ENCODE measurements at regions of chr11 and their contacts with region 1.

Region 1: DNA sequence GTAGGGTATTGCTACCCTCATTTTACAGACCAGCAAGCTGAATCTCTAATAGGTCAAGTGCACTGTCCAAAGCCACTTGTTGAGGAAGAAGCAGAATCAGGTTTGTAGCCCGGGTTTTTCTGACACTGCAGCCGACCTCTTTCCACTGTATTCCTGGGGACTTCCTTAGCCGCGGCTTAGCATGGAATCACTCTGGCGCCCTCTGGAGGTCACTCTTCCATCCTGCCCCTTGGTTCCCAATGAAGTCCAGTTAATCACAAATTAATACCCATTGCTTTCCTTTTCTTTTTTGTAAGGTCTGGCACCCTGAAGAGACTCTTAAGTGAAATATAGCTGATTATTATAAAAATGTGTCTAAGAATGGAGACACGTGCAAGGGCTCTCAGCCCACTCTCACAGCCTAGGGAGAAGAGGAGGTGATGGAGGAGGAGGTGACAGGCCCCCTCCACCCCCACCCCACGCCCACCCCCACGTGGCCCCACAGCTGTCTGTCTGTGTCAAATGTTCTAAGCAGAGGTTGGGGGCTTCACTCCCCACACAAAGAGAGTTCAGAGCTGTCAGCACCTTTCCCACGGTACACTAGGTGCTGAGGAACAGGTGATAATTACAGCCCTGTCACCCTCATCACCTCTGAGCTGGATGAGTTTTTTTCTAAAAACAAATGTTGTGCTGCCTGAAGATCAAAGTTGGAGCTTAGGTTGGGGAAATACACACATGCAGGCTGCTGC is 57.7 kb upstream of the DRD2 start:
- DNase-seq: peak; percentile 48 to 96 (median 85)

Region 2: DNA sequence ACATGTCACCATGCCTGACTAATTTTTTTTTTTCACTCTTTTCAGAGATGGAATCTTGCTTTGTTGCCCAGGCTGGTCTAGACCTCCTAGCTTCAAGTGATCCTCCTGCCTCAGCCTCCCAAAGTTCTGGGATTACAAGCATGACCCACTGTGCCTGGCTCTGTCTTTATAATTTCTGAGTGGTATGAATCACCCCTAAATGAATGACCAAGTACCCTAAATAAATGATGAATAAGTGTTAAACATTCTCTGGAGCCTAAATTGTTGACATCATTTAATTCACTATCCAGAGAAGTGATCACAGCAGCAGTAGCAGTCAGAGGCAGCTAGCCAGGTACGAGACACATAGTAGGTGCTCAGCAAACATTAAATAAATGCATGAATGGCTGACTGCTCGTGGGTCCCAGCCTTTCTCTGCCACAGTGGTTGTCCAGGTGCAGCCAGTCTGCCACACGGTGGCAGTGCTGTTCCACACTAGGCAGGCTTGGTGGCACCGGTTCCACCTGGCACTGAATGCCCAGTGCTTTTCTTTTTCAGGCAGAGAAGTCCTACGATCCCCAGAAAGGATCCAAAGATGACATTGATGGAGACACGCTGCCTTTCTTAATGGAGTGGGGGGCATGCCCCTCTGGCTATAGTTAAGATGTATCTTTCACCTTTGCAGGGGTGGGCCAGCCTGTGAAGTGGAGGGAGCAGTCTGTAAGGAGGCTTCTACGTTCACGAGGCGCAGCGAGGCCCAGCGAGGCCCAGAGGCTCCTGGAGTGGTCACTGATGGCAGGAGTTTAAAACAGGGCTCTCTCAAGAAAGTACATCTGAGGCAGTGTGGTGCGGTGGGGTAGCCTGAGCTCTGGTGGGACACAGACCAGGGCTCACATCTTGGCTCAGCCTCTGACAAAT is 227.2 kb before region 1 on chr11:
- intact Hi-C with region 1: loop called (anchors 1 kb)
- DNase-seq: peak; percentile 68 to 97 (median 87)

Region 3: DNA sequence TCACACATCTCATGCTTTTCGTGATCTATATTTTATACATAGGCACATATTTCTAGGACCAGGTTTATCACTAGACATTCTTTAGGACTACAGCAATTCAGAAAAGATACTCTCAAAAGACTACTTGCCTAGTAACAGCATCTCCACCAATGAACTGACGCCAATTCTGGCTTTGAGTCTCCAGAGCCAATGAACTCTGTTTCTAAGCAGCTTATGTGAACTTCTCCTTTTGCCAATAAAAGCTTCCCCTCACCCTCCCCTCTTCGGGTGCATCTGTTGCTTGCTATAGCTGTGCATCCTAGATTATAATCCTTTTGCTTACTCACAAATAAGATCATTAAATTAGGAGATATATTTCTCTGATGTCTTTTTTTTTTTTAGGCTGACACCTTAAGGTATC is 156.7 kb before region 1 on chr11:
- intact Hi-C with region 1: loop called (anchors 10 kb)
- DNase-seq: no peak

Region 4: GRCh38 chr11:113690619-113691569 is 158.0 kb after region 1 on chr11:
- intact Hi-C with region 1: no loop called
- DNase-seq: peak in 3 of 10 donors; percentile 23 to 84 (median 80)

Region 5: GRCh38 chr11:113730887-113731726 is 198.2 kb after region 1 on chr11:
- intact Hi-C with region 1: loop called (anchors 10 kb)
- DNase-seq: peak in 6 of 10 donors; percentile 24 to 86 (median 53)

Measured in posterior cingulate gyrus (tissue), 11 donors.